CD4-positive, alpha-beta T cell (primary cell): ENCODE measurements at regions of chr4 and their contacts with region 1.

Region 1: GRCh38 chr4:2811830-2812611 is 19.1 kb downstream of the SH3BP2 start:
- DNase-seq: peak in 12 of 14 experiments; percentile 34 to 85 (median 54)
- ATAC-seq: peak; percentile 80
- H3K4me3 ChIP-seq: peak overlapping the region; percentile 77
- H3K4me3 Mint-ChIP-seq: peak overlapping the region; percentile 99
- H3K27ac ChIP-seq: peak overlapping the region; percentile 80 to 83
- H3K27ac Mint-ChIP-seq: peak overlapping the region; percentile 95
- H3K4me1 ChIP-seq: peaks cover 68% of the 10 kb centered on the region
- H3K4me1 Mint-ChIP-seq: peaks cover 56% of the 10 kb centered on the region
- H3K27me3 ChIP-seq: no peaks in the 10 kb centered on the region
- H3K27me3 Mint-ChIP-seq: no peaks in the 10 kb centered on the region
- CTCF ChIP-seq: no peak

Region 2: GRCh38 chr4:2800691-2801596 is 11.1 kb before region 1 on chr4:
- CTCF ChIA-PET with region 1: interaction called, 5 read pairs
- POLR2A ChIA-PET with region 1: interaction called, 58 read pairs
- intact Hi-C with region 1: loop called in 1 of 2 experiments (anchors 2 kb)
- DNase-seq: peak in 5 of 14 experiments; percentile 23 to 79 (median 41)
- ATAC-seq: no peak
- H3K4me3 ChIP-seq: peak overlapping the region; percentile 52
- H3K4me3 Mint-ChIP-seq: peak overlapping the region; percentile 51
- H3K27ac ChIP-seq: peak overlapping the region in 1 of 2 donors; percentile 37
- H3K27ac Mint-ChIP-seq: peak overlapping the region; percentile 70
- H3K4me1 ChIP-seq: peaks cover 86% of the 10 kb centered on the region
- H3K4me1 Mint-ChIP-seq: peaks cover 31% of the 10 kb centered on the region
- H3K27me3 ChIP-seq: no peaks in the 10 kb centered on the region
- H3K27me3 Mint-ChIP-seq: no peaks in the 10 kb centered on the region
- CTCF ChIP-seq: no peak

Region 3: DNA sequence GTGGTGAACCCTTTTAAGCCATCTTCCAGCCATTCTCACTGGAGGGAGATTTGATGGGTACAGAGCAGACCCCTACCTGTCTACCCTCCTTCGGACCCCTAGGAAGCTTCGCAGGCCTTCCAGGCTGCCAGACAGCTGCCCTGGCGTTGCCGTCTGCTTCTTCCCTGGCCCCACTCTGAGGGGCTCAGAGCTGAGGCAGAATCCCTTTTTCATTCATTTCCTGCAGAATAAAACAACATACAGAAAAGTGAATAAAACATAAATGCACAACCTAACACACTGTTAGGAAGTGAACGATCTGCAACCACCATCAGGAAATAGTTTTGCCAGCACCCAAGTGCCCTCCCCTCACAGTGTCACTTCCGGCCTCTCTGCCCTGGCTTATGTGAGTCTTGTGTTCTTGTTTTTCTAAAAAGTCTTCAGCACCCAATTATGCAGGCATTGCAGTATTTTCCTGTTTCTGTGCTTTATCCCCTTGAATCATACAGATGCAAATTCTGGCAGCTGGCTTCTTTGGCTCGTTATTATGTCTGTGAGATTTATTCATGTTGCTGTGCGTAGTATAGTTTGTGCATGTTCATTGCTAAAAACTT is 26.0 kb after region 1 on chr4:
- CTCF ChIA-PET with region 1: no interaction called
- POLR2A ChIA-PET with region 1: interaction called, 24 read pairs
- intact Hi-C with region 1: loop called in 1 of 2 experiments (anchors 1 kb)
- DNase-seq: peak; percentile 56 to 89 (median 74)
- ATAC-seq: peak; percentile 98
- H3K4me3 ChIP-seq: peak overlapping the region; percentile 50
- H3K4me3 Mint-ChIP-seq: peak overlapping the region; percentile 86
- H3K27ac ChIP-seq: peak overlapping the region; percentile 76
- H3K27ac Mint-ChIP-seq: peak overlapping the region; percentile 89
- H3K4me1 ChIP-seq: peaks cover 69% of the 10 kb centered on the region
- H3K4me1 Mint-ChIP-seq: peaks cover 59% of the 10 kb centered on the region
- H3K27me3 ChIP-seq: no peaks in the 10 kb centered on the region
- H3K27me3 Mint-ChIP-seq: no peaks in the 10 kb centered on the region
- CTCF ChIP-seq: no peak

Region 4: GRCh38 chr4:2843263-2843940 is 31.4 kb after region 1 on chr4 and contains the start of gene ADD1:
- CTCF ChIA-PET with region 1: no interaction called
- POLR2A ChIA-PET with region 1: interaction called, 24 read pairs
- intact Hi-C with region 1: no loop called
- DNase-seq: peak; percentile 82 to 100 (median 92)
- ATAC-seq: peak; percentile 93
- H3K4me3 ChIP-seq: peak within 1 kb of the TSS; percentile 97
- H3K4me3 Mint-ChIP-seq: peak within 1 kb of the TSS; percentile 98
- H3K27ac ChIP-seq: peak within 1 kb of the TSS; percentile 66 to 85
- H3K27ac Mint-ChIP-seq: peak within 1 kb of the TSS; percentile 92
- H3K4me1 ChIP-seq: peaks cover 49% of the 10 kb centered on the region
- H3K4me1 Mint-ChIP-seq: peaks cover 63% of the 10 kb centered on the region
- H3K27me3 ChIP-seq: no peaks in the 10 kb centered on the region
- H3K27me3 Mint-ChIP-seq: no peaks in the 10 kb centered on the region
- CTCF ChIP-seq: no peak
- total RNA-seq, gene ADD1: 153 TPM

Region 5: GRCh38 chr4:2852481-2852921 is 40.5 kb after region 1 on chr4:
- CTCF ChIA-PET with region 1: interaction called, 3 read pairs
- POLR2A ChIA-PET with region 1: no interaction called
- intact Hi-C with region 1: loop called in 1 of 2 experiments (anchors 5 kb)
- DNase-seq: peak in 3 of 14 experiments; percentile 34 to 46 (median 40)
- ATAC-seq: peak; percentile 67
- H3K4me3 ChIP-seq: no peak overlapping the region
- H3K4me3 Mint-ChIP-seq: peak overlapping the region; percentile 26
- H3K27ac ChIP-seq: peak overlapping the region; percentile 9 to 58
- H3K27ac Mint-ChIP-seq: peak overlapping the region; percentile 82
- H3K4me1 ChIP-seq: peaks cover 53% of the 10 kb centered on the region
- H3K4me1 Mint-ChIP-seq: peaks cover 79% of the 10 kb centered on the region
- H3K27me3 ChIP-seq: no peaks in the 10 kb centered on the region
- H3K27me3 Mint-ChIP-seq: no peaks in the 10 kb centered on the region
- CTCF ChIP-seq: no peak

Region 6: DNA sequence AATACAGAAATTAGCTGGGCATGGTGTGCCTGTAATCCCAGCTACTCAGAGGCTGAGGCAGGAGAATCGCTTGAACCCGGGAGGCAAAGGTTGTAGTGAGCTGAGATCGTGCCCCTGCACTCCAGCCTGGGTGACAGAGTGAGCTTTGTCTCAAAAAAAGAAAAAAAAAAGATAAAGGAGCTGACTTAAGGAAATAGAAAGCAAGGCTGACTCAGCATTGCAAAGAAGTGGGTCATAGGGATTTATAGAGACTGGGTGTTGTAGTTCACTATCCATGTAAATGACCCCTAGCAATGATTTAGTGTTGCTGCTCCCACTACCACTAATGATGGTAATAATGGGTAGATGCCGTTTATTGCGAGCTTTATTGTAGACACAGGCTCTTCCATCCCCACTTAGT is 79.3 kb after region 1 on chr4:
- CTCF ChIA-PET with region 1: no interaction called
- POLR2A ChIA-PET with region 1: no interaction called
- intact Hi-C with region 1: no loop called
- DNase-seq: no peak
- ATAC-seq: no peak
- H3K4me3 ChIP-seq: no peak overlapping the region
- H3K4me3 Mint-ChIP-seq: no peak overlapping the region
- H3K27ac ChIP-seq: no peak overlapping the region
- H3K27ac Mint-ChIP-seq: peak overlapping the region; percentile 29
- H3K4me1 ChIP-seq: no peaks in the 10 kb centered on the region
- H3K4me1 Mint-ChIP-seq: peaks cover 5% of the 10 kb centered on the region
- H3K27me3 ChIP-seq: no peaks in the 10 kb centered on the region
- H3K27me3 Mint-ChIP-seq: no peaks in the 10 kb centered on the region
- CTCF ChIP-seq: no peak

Region 7: GRCh38 chr4:3531879-3532713 is 720.1 kb after region 1 on chr4 and contains the start of gene LRPAP1:
- CTCF ChIA-PET with region 1: no interaction called
- POLR2A ChIA-PET with region 1: no interaction called
- intact Hi-C with region 1: no loop called
- DNase-seq: peak; percentile 59 to 94 (median 80)
- ATAC-seq: peak; percentile 91
- H3K4me3 ChIP-seq: peak within 1 kb of the TSS; percentile 85
- H3K4me3 Mint-ChIP-seq: peak within 1 kb of the TSS; percentile 100
- H3K27ac ChIP-seq: no peak within 1 kb of the TSS
- H3K27ac Mint-ChIP-seq: peak within 1 kb of the TSS; percentile 94
- H3K4me1 ChIP-seq: peaks cover 52% of the 10 kb centered on the region
- H3K4me1 Mint-ChIP-seq: peaks cover 36% of the 10 kb centered on the region
- H3K27me3 ChIP-seq: no peaks in the 10 kb centered on the region
- H3K27me3 Mint-ChIP-seq: no peaks in the 10 kb centered on the region
- CTCF ChIP-seq: no peak
- total RNA-seq, gene LRPAP1: 84.2 to 88.0 TPM